CD8-positive, alpha-beta memory T cell (primary cell): ENCODE measurements at regions of chr20 and their contacts with region 1.

Region 1: DNA sequence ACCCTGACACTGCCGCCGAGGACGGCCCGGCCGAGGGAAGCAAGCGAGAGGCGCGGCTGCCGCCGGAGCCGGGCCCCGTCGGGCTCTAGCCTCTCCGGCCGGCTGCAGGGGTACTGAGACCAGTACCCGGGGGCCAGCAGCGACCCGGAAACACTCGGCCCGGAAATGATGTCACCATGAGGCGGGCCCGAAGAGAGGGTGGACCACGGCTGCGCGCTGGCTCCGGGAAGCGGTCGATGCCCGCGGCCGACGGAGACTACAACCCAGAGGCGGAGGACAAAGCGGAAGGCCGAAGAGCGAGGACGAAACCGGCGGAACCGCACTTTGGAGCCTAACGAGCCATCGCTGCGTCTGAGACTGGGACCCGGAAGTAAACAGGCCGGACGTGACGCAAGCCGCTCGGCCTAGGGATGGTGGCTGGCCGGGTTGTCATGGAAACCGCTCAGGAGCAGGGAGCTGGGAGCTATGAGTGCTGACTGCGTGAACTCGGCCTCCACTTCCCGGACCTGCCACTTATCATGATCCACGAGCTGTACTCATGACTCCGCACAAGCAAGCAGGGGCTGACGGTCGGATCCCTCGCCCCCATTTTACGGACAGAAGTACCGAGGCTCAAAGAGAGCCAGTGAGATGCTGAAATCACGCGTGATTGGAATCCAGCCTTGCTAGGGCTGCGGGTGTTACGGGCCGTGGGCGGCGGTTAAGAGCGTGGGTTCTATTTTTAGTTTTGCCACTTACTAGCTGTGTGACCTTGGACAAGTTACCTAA is at the start of gene SPATA2:
- DNase-seq: peak; percentile 92 to 97 (median 93)
- H3K4me3 ChIP-seq: peak within 1 kb of the TSS; percentile 98
- H3K4me3 Mint-ChIP-seq: peak within 1 kb of the TSS; percentile 96 to 100 (median 98)
- H3K27ac ChIP-seq: peak within 1 kb of the TSS; percentile 100
- H3K27ac Mint-ChIP-seq: peak within 1 kb of the TSS; percentile 97 to 100 (median 100)
- H3K4me1 ChIP-seq: peaks cover 36% of the 10 kb centered on the region
- H3K4me1 Mint-ChIP-seq: peaks cover 30 to 55% (median 46%) of the 10 kb centered on the region in 3 donors
- H3K27me3 ChIP-seq: no peaks in the 10 kb centered on the region
- H3K27me3 Mint-ChIP-seq: no peaks in the 10 kb centered on the region
- total RNA-seq, gene SPATA2: 15.0 to 16.0 TPM

Region 2: DNA sequence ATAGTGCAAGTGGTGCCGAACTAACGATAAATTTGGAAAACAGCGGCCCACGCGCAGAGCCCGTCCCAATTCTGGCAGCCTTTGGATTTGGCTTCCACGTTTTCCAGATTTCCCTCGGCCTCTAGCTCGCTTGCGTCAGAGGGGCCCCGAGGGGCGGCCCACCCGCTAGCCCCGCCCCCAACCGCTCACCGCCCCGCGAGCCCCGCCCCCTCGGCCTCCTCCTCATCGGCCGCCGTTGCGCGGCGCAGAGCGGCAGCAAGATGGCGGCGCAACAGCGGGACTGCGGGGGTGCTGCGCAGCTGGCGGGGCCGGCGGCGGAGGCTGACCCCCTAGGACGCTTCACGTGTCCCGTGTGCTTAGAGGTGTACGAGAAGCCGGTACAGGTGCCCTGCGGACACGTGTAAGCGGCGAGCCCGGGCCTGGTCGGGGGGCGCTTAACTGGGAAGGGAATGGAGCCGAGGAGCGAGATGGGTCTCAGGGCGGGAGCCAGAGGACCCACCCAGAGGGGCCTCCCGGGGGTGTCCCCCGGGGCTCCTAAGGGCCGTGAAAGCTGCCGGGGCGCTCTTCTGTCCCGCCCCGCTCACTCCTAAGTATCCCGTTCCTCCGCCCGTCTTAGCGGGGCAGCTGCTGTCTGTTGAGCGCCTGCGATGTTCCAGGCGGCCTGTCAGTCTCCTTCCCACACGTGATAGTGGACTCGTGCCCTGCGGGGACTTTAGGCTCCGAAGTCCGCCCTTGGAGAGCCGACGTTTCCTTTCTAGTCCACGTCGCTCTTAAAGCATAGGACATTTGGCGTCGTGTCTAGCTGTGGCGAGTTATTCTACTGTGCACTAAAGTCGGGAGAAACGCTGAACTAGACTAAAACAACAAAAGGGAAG is 20.8 kb after region 1 on chr20 and contains the start of gene RNF114:
- CTCF ChIA-PET with region 1: interaction called, 8 read pairs
- POLR2A ChIA-PET with region 1: interaction called, 34 read pairs
- DNase-seq: peak; percentile 83 to 93 (median 88)
- H3K4me3 ChIP-seq: peak within 1 kb of the TSS; percentile 98
- H3K4me3 Mint-ChIP-seq: peak within 1 kb of the TSS; percentile 90 to 99 (median 97)
- H3K27ac ChIP-seq: peak within 1 kb of the TSS; percentile 93
- H3K27ac Mint-ChIP-seq: peak within 1 kb of the TSS; percentile 91 to 99 (median 96)
- H3K4me1 ChIP-seq: peaks cover 34% of the 10 kb centered on the region
- H3K4me1 Mint-ChIP-seq: peaks cover 48 to 62% (median 53%) of the 10 kb centered on the region in 3 donors
- H3K27me3 ChIP-seq: no peaks in the 10 kb centered on the region
- H3K27me3 Mint-ChIP-seq: no peaks in the 10 kb centered on the region
- total RNA-seq, gene RNF114: 64.0 to 67.1 TPM